Colonic mucosa (tissue), 4 donors: ENCODE measurements at regions of chr1 and their contacts with region 1.

Region 1: DNA sequence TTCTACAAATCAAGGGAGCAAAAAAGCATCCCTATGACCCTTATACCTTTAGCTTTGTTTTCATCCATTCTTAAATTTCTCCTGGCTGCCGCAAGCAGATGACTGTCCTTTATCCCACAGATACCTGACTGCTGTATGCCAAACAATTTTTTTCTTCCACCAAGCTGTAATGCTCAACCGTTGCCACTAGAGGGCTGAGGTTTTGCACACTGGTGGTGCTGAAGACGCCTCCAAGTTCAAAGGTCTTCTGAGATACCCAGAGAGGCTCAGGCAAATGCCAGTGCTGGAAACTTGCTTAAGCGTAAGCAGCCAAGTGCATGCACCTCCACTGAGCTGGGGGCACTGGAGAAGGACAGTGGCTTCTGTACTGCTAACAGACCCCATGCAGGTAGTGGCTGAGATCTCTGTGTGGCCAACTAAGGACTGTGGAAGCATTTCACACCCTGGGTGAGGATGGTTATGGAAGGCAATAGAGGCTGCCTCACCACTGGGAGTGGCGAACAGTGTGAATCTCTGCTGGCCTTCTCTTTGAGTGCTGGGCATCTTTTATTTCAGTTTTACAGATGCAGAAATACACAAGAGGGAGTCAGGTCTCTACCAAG is 28.5 kb downstream of the CNIH3 start:
- DNase-seq: peak; percentile 73
- H3K4me3 ChIP-seq: no peak overlapping the region
- H3K27ac ChIP-seq: no peak overlapping the region
- H3K4me1 ChIP-seq: no peaks in the 10 kb centered on the region
- H3K27me3 ChIP-seq: no peaks in the 10 kb centered on the region
- CTCF ChIP-seq: peak; percentile 89

Region 2: GRCh38 chr1:224513787-224514209 is 130.9 kb before region 1 on chr1:
- intact Hi-C with region 1: loop called (anchors 2 kb)
- DNase-seq: peak; percentile 94
- H3K4me3 ChIP-seq: no peak overlapping the region
- H3K27ac ChIP-seq: no peak overlapping the region
- H3K4me1 ChIP-seq: peaks cover 9% of the 10 kb centered on the region
- H3K27me3 ChIP-seq: no peaks in the 10 kb centered on the region
- CTCF ChIP-seq: peak; percentile 79

Region 3: DNA sequence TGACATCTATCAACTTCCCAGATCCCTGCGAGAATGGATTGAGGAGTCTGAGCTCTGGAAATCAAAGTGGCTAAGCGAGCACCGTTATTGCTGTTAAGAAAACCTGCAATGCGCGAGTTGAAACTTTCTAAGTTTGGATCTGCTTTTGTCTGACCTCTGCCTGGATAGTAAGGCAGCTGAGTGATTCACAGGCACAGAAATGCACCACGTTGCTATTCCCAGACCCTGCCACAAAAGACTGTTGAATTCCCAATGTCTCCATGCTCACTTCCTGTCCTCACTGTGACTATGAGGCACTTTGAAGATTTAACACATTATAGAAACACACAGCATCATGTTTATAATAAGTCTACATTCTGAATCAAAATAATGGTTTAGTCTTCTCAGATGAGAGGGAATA is 55.6 kb before region 1 on chr1:
- intact Hi-C with region 1: no loop called
- DNase-seq: no peak
- H3K4me3 ChIP-seq: no peak overlapping the region
- H3K27ac ChIP-seq: no peak overlapping the region
- H3K4me1 ChIP-seq: no peaks in the 10 kb centered on the region
- H3K27me3 ChIP-seq: no peaks in the 10 kb centered on the region
- CTCF ChIP-seq: no peak

Region 4: GRCh38 chr1:224828691-224829090 is 184.0 kb after region 1 on chr1:
- intact Hi-C with region 1: no loop called
- DNase-seq: no peak
- H3K4me3 ChIP-seq: no peak overlapping the region
- H3K27ac ChIP-seq: no peak overlapping the region
- H3K4me1 ChIP-seq: no peaks in the 10 kb centered on the region
- H3K27me3 ChIP-seq: no peaks in the 10 kb centered on the region
- CTCF ChIP-seq: no peak

Region 5: DNA sequence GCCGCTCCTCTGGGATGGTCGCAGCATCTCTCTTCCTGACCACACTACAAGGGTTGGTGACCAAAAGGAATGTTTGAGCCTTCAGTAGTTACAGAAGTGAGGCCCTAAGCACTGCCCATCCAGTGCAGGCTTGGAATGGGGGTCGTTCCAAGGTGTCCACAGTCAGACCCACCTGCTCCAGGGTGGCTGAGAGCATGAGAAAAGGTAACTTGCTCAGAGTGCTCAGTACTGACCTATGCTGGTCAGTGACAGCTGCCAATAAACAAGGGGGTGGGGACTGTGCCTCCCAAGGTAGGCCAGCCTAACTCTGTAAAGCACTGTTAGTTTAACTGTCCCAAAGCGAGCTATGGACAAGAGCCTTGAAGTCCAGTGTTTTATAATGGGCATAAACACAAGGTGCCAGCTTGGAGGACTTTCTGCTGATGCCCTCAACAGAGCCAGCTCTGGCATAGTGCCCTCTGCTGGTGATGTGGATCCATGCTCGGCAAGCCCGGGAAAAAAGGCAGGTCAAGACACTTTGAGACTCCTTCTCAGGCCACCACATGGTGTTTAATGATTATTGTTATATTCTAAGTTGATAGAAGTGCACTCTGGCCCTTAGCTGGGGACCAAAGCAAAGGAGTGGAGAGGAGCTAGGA is 206.7 kb after region 1 on chr1:
- intact Hi-C with region 1: loop called (anchors 5 kb)
- DNase-seq: peak; percentile 73
- H3K4me3 ChIP-seq: no peak overlapping the region
- H3K27ac ChIP-seq: no peak overlapping the region
- H3K4me1 ChIP-seq: no peaks in the 10 kb centered on the region
- H3K27me3 ChIP-seq: no peaks in the 10 kb centered on the region
- CTCF ChIP-seq: peak; percentile 69

Region 6: DNA sequence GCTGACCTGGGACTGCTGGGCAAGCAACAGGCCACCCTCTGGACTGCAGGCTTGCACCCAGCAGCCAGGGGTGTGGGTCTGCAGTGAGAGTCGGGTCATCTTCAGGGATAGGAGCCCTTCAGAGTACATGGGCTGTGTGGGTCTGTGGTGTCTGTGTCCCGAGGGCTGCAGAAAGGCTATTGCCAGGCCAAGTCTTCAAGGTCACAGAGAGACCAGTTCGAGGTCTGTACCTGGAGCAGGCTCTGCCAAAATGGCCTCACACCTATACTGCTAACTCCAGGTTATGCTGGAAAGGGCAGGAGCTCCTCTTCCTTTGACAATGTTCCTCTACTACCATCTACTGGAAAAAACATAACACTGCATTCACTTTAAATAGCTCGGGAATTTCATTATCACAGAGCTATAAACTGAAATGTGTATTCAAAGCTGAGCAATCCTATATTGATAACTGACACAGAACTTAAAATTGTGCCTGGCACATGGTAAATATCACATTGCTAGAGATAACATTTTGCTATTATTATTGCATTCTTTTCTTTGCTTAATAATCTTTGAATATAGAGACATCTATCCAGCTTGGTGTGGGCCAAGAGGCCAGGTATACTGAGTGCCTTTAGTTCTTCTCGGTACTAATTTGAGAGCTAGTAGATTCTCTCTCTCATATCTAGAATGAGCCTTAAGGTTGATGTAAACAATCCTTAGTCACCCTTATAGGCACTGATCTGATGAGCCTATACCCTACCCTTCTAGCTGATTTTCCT is 277.9 kb after region 1 on chr1:
- intact Hi-C with region 1: loop called (anchors 5 kb)
- DNase-seq: no peak
- H3K4me3 ChIP-seq: no peak overlapping the region
- H3K27ac ChIP-seq: no peak overlapping the region
- H3K4me1 ChIP-seq: no peaks in the 10 kb centered on the region
- H3K27me3 ChIP-seq: no peaks in the 10 kb centered on the region
- CTCF ChIP-seq: peak; percentile 57